Testis (tissue), 5 donors: ENCODE measurements at regions of chr4 and their contacts with region 1.

Region 1: GRCh38 chr4:185640811-185641675 is 105.7 kb upstream of the PDLIM3 start:
- DNase-seq: peak; percentile 32
- H3K4me3 ChIP-seq: no peak overlapping the region
- H3K27ac ChIP-seq: no peak overlapping the region
- H3K4me1 ChIP-seq: no peaks in the 10 kb centered on the region
- H3K27me3 ChIP-seq: no peaks in the 10 kb centered on the region
- CTCF ChIP-seq: peak in 1 of 3 experiments; percentile 25
- POLR2A ChIP-seq: no peak

Region 2: DNA sequence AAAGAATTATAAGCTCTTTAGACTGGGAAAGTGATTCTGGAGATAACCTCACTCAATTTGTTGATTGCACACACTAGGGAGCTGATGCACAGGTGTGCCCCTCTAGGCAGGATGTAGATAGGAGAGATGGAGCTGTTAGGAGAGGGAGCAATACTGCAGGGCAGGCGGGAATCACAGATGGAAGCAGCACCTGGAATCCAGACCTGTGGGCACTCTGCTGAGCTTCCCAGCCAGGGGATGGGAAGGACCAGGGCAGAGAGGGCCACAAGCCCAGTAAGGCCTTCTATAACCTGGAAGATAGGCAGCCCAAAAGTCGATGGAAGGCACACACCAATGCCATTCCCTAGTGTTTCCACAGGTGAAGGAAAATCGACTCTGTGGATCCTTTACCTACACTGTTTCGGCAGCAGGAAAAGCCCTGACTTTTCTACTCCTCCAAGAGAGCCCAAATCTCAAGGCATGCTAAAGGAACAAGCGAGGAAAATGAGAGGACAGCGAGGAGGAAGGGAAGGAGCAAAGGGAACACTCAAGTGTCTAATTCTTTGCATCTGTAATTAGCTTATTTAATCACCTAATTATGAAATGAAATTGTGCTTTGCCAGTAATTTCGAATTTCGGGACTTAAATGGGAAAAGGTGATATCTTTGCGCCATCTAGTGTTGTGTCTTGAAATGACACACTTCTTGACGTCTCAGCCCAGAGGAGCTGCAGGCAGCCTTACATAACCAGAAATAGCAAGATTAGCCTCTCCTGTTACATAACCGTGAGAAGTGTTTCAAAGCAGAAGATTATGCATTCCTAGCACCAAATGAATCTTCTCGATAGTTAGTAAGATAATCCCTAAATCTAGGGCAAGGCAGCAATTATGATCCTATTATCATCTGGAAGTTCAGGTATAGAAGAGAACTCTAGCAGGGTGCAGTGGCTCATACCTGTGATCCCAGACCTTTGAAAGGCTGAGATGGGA is 396.9 kb after region 1 on chr4:
- intact Hi-C with region 1: loop called (anchors 10 kb)
- DNase-seq: peak; percentile 78
- H3K4me3 ChIP-seq: no peak overlapping the region
- H3K27ac ChIP-seq: no peak overlapping the region
- H3K4me1 ChIP-seq: no peaks in the 10 kb centered on the region
- H3K27me3 ChIP-seq: no peaks in the 10 kb centered on the region
- CTCF ChIP-seq: peak; percentile 71 to 86 (median 71)
- POLR2A ChIP-seq: no peak